Breast epithelium (tissue), 4 donors: ENCODE measurements at regions of chr13 and their contacts with region 1.

Region 1: DNA sequence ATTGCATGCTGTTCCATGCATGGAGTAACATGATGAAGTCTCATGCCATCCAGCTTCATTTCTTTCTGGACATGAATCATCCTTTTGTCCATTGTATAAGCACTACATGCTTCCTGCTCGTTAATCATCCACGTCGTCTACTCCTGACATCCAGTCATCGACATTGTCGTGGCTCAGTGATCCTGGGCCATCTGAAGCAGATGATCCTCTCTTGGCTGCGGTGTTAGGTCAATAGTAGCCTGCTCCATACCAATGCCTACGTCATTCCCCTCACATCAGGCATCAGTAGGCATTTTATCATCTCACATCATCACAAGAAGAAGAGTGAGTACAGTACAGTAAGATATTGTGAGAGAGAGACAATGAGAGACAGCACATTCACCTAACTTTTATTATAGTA is 7.9 kb upstream of the MYO16 start:
- DNase-seq: no peak
- H3K4me3 ChIP-seq: no peak overlapping the region
- H3K27ac ChIP-seq: no peak overlapping the region
- H3K4me1 ChIP-seq: no peaks in the 10 kb centered on the region
- H3K27me3 ChIP-seq: no peaks in the 10 kb centered on the region
- CTCF ChIP-seq: no peak
- POLR2A ChIP-seq: no peak

Region 2: DNA sequence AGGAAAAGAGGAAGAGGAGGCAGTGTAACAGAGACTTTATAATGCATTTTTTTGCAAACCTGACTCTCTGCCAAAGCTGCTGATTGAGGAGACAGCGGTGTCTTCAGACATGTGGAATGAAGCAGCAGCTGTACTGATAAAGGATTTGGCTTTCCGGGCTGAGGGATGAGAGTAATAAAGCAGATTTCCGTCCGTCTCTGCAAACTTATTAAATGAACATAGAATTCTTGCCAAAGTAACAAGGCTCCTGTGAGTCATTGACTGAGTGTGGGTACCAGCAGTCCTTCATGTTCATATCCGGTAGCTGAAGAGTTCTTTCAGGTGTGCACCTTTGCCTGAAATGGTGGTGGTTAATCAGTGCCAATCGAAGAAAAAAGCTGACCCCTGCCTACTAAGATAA is 518.7 kb before region 1 on chr13:
- intact Hi-C with region 1: loop called (anchors 5 kb)
- DNase-seq: no peak
- H3K4me3 ChIP-seq: no peak overlapping the region
- H3K27ac ChIP-seq: no peak overlapping the region
- H3K4me1 ChIP-seq: no peaks in the 10 kb centered on the region
- H3K27me3 ChIP-seq: peaks cover 0 to 4% of the 10 kb centered on the region in 2 donors
- CTCF ChIP-seq: no peak
- POLR2A ChIP-seq: no peak

Region 3: DNA sequence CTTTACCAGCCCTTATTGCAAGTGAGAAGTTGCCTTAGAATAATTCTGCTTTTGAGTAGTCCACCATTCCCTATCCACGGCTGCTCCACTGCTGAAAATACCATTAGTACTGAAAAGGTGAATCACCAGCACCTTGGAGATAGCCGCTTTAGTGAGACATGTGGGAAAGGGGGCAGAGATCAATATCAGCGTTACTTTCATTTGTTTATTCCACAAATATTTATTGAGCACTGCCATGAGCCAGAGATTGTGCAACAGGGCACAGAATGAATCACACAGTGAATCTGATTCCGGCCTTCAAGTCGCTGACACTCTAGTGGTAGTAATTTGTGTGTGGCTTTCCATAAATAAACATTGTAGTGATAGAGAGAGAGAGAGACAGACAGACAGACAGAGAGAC is 23.5 kb before region 1 on chr13:
- intact Hi-C with region 1: loop called (anchors 2 kb)
- DNase-seq: no peak
- H3K4me3 ChIP-seq: no peak overlapping the region
- H3K27ac ChIP-seq: no peak overlapping the region
- H3K4me1 ChIP-seq: no peaks in the 10 kb centered on the region
- H3K27me3 ChIP-seq: no peaks in the 10 kb centered on the region
- CTCF ChIP-seq: no peak
- POLR2A ChIP-seq: no peak

Region 4: GRCh38 chr13:109743706-109744453 is 1122.4 kb after region 1 on chr13:
- intact Hi-C with region 1: no loop called
- DNase-seq: no peak
- H3K4me3 ChIP-seq: no peak overlapping the region
- H3K27ac ChIP-seq: no peak overlapping the region
- H3K4me1 ChIP-seq: no peaks in the 10 kb centered on the region
- H3K27me3 ChIP-seq: no peaks in the 10 kb centered on the region
- CTCF ChIP-seq: no peak
- POLR2A ChIP-seq: no peak